PC-9 (cell line): ENCODE measurements at regions of chr17 and their contacts with region 1.

Region 1: DNA sequence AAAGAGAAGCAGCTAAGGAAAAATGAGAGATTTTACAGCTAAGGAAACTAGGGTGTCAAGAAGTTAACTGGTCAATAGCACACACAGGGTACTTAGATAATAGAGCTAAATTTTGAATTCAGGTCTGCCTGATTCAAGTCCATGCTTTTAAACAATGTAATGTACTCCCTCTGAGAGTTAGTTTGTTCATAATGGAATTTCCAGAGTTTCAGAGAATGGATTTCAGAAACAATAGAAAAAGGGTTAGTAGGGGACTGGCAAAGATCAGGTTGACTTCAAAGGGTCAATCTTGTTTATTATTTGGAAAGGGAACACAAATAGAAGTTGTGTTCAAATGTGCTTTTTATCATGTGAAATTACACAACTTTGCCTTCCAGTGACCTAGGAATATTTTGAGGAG is 17.9 kb downstream of the NSRP1 start:
- DNase-seq: no peak
- H3K4me3 ChIP-seq: no peak overlapping the region
- H3K27ac ChIP-seq: no peak overlapping the region
- H3K4me1 ChIP-seq: no peaks in the 10 kb centered on the region
- H3K27me3 ChIP-seq: no peaks in the 10 kb centered on the region
- CTCF ChIP-seq: no peak

Region 2: DNA sequence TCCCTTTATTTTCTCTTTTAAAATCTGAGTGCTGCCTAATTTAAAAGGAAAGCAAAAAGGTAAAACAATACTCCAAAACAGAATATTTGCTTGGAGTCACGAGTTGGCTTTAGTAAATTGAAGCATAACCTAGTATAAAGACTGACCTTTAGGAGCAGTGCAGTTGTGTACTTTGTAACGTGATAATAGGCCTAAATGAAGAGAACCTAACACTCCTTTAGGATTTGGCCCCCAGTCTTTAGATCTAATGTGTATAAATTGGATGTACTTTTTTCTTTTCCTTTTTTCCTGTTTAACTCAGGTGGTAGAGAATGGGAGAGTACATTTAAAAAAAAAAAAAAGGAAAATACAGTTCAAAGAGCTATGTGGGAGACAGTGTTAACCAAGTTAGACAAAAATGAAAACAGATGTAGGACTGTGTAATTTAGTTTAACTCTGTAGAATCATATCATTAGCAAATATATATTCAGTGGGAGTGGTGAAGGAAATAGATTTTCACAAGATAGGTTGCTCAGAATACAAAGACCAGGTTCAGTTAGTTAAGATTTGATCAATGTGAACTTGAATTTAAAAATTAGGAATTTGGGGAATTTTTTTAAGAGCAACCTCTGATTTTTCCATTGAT is 261.0 kb after region 1 on chr17:
- CTCF ChIA-PET with region 1: interaction called, 3 read pairs
- POLR2A ChIA-PET with region 1: interaction called, 19 read pairs
- intact Hi-C with region 1: no loop called
- DNase-seq: no peak
- H3K4me3 ChIP-seq: no peak overlapping the region
- H3K27ac ChIP-seq: no peak overlapping the region; the same call in 1 of the 2 replicates
- H3K4me1 ChIP-seq: 0 out of 2 replicates have a peak, but pooled peaks cover 10% of the 10 kb centered on the region
- H3K27me3 ChIP-seq: no peaks in the 10 kb centered on the region
- CTCF ChIP-seq: no peak

Region 3: GRCh38 chr17:30854146-30854545 is 719.6 kb after region 1 on chr17:
- CTCF ChIA-PET with region 1: no interaction called
- POLR2A ChIA-PET with region 1: interaction called, 15 read pairs
- intact Hi-C with region 1: no loop called
- DNase-seq: no peak
- H3K4me3 ChIP-seq: no peak overlapping the region
- H3K27ac ChIP-seq: no peak overlapping the region
- H3K4me1 ChIP-seq: no peaks in the 10 kb centered on the region
- H3K27me3 ChIP-seq: no peaks in the 10 kb centered on the region
- CTCF ChIP-seq: no peak